Activated B cell treated with CpG ODN at 0.5 μM for 24 hours (primary cell): ENCODE measurements at regions of chr10 and their contacts with region 1.

Region 1: DNA sequence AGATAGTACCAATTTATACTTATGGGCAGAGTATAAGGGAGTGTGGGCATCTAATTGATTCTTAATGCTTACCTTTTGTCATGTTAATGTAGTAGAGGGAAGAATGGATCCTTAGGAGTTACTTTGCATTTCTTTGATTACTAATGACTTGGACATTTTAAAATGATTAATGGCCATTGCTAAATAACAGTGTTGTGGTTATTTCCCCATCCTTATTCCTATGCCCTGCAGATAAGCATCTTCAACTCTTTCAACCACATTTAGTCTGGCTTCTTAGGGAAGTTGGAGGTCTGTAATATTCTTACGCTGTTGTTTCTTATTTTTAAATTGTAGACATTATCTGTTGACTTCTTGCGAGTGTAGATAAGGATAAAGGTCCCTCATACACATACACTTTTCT is 37.2 kb downstream of the KAT6B start:
- DNase-seq: no peak
- ATAC-seq: no peak
- H3K4me3 Mint-ChIP-seq: no peak overlapping the region
- H3K27ac Mint-ChIP-seq: no peak overlapping the region
- H3K4me1 Mint-ChIP-seq: peaks cover 7% of the 10 kb centered on the region
- H3K27me3 Mint-ChIP-seq: no peaks in the 10 kb centered on the region
- CTCF ChIP-seq: no peak

Region 2: GRCh38 chr10:74518061-74518460 is 345.5 kb before region 1 on chr10:
- CTCF ChIA-PET with region 1: no interaction called
- POLR2A ChIA-PET with region 1: no interaction called
- intact Hi-C with region 1: no loop called
- DNase-seq: no peak
- ATAC-seq: no peak
- H3K4me3 Mint-ChIP-seq: no peak overlapping the region
- H3K27ac Mint-ChIP-seq: no peak overlapping the region
- H3K4me1 Mint-ChIP-seq: peaks cover 5% of the 10 kb centered on the region
- H3K27me3 Mint-ChIP-seq: no peaks in the 10 kb centered on the region
- CTCF ChIP-seq: no peak

Region 3: GRCh38 chr10:74808501-74808900 is 55.0 kb before region 1 on chr10:
- CTCF ChIA-PET with region 1: no interaction called
- POLR2A ChIA-PET with region 1: interaction called, 10 read pairs
- intact Hi-C with region 1: no loop called
- DNase-seq: no peak
- ATAC-seq: no peak
- H3K4me3 Mint-ChIP-seq: no peak overlapping the region
- H3K27ac Mint-ChIP-seq: no peak overlapping the region
- H3K4me1 Mint-ChIP-seq: no peaks in the 10 kb centered on the region
- H3K27me3 Mint-ChIP-seq: peaks cover 3% of the 10 kb centered on the region
- CTCF ChIP-seq: no peak